Colonic mucosa (tissue), 4 donors: ENCODE measurements at regions of chr13 and their contacts with region 1.

Region 1: GRCh38 chr13:24505256-24505655 is 7.3 kb downstream of the PARP4 start:
- DNase-seq: no peak
- H3K4me3 ChIP-seq: no peak overlapping the region
- H3K27ac ChIP-seq: no peak overlapping the region
- H3K4me1 ChIP-seq: no peaks in the 10 kb centered on the region
- H3K27me3 ChIP-seq: no peaks in the 10 kb centered on the region
- CTCF ChIP-seq: no peak

Region 2: GRCh38 chr13:24299488-24300114 is 205.7 kb before region 1 on chr13:
- intact Hi-C with region 1: loop called (anchors 5 kb)
- DNase-seq: no peak
- H3K4me3 ChIP-seq: no peak overlapping the region
- H3K27ac ChIP-seq: no peak overlapping the region
- H3K4me1 ChIP-seq: no peaks in the 10 kb centered on the region
- H3K27me3 ChIP-seq: no peaks in the 10 kb centered on the region
- CTCF ChIP-seq: no peak